ENCODE measurements at regions of chr3 and their contacts with region 1.

Region 1: GRCh38 chr3:185733980-185734724 is 90.7 kb downstream of the IGF2BP2 start:
- DNase-seq: peak; percentile 71 to 82
- ATAC-seq: peak; percentile 92
- H3K4me3 ChIP-seq: no peak overlapping the region
- H3K27ac ChIP-seq: no peak overlapping the region
- H3K4me1 ChIP-seq: peaks cover 46% of the 10 kb centered on the region
- CTCF ChIP-seq: peak; percentile 67
- EP300 ChIP-seq: no peak
- POLR2A ChIP-seq: no peak
- RAD21 ChIP-seq: peak; percentile 80 to 83

Region 2: GRCh38 chr3:185744997-185745843 is 11.1 kb after region 1 on chr3:
- CTCF ChIA-PET with region 1: interaction called, 12 read pairs
- POLR2A ChIA-PET with region 1: no interaction called
- DNase-seq: peak in 1 of 2 experiments; percentile 29
- ATAC-seq: peak in 1 of 2 experiments; percentile 70; a peak in 3 of 6 replicates
- H3K4me3 ChIP-seq: no peak overlapping the region
- H3K27ac ChIP-seq: no peak overlapping the region
- H3K4me1 ChIP-seq: peaks cover 8% of the 10 kb centered on the region; the same call in 1 of the 3 replicates
- CTCF ChIP-seq: no peak
- EP300 ChIP-seq: no peak
- POLR2A ChIP-seq: no peak
- RAD21 ChIP-seq: no peak

Region 3: DNA sequence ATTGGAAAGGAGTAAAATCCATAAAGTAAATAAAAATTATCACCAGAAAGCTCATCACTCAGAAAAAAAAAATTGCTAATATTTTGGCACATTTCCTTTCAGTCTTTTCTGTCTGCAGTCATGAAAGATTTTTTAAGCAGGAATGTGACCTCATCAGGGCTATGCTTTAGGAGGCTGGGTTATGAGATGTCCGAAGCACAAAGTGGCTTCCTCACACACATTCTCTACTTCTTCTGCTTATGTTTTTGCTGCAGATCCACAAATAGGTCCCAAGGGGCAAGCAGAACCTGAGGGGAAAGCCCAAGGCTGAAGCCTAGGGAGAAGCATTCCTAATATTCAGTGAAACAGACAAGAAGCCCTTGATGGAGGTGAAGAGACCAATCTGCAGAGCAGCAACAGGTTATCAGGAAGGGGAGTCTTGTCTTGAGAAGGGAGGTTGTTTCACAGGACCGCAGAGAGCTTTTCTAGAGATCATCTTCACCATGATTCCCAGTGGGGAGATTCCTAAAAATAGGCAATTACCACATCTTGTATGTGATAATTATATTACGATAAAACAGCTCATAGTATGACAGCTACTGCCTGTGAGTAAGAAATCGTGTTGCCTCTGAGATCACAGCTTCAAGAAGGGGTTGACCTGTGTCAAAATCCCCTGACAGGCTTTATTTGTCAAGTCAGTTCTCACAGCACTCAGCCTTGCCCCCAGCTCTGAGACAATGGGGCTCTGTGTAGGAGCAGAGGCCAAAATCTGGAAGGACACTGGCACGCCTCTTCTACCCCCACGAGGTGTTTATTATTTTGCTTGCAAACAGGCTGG is 30.2 kb after region 1 on chr3:
- CTCF ChIA-PET with region 1: interaction called, 31 read pairs
- POLR2A ChIA-PET with region 1: no interaction called
- DNase-seq: no peak
- ATAC-seq: no peak
- H3K4me3 ChIP-seq: no peak overlapping the region
- H3K27ac ChIP-seq: no peak overlapping the region
- H3K4me1 ChIP-seq: no peaks in the 10 kb centered on the region
- CTCF ChIP-seq: no peak
- EP300 ChIP-seq: no peak
- POLR2A ChIP-seq: no peak
- RAD21 ChIP-seq: no peak

Region 4: GRCh38 chr3:185770109-185770508 is 36.0 kb after region 1 on chr3:
- CTCF ChIA-PET with region 1: interaction called, 31 read pairs
- POLR2A ChIA-PET with region 1: no interaction called
- DNase-seq: no peak
- ATAC-seq: no peak
- H3K4me3 ChIP-seq: no peak overlapping the region
- H3K27ac ChIP-seq: no peak overlapping the region
- H3K4me1 ChIP-seq: no peaks in the 10 kb centered on the region
- CTCF ChIP-seq: no peak
- EP300 ChIP-seq: no peak
- POLR2A ChIP-seq: no peak
- RAD21 ChIP-seq: no peak

Region 5: DNA sequence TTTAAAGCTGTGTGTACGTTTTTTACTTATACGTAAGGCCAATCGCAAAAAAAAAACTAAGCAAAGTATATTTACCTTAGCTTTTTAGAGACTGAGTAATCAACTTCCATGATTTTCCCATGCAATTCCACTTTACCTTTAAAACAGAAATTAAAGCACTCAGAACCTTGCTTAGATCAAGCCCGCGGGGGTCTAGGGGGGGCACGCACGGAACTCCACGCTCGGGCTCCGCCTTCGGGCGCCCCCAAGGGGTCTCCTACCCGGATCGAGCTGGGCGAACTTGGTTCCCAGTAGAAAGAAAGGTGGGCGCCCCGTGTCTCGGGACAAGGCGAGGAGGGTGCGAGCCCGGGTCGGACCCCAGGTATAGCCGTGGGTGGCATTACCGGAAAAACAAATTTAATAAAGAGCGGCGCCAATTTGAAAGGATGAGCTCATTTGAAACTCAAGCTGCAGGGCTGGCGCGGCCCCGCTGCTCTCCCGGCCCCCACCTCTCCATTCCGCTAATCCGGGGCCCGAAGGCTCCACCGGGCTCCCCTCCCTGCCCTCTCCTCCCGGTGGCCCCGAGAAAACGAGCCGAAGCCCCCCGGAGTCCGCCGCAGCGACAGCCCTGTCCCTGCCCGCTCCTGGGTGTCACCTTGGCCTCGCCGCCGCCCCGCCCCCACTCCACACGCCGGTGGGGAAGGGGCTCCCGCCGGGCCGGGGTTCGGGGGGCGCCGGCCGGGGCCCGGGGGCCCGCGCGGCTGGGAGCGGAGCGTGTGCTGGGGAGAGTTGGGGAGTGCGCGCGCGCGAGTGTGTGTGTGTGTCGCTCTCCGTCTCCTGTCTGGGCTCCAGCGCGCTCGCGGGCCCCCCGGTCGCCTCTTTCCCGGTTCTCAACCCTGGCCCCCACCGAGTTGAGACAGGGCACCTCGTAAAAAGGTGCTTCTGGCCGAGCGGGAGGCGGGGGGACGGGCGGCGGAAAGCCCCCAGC is 89.2 kb after region 1 on chr3:
- CTCF ChIA-PET with region 1: interaction called, 11 read pairs
- POLR2A ChIA-PET with region 1: no interaction called
- DNase-seq: no peak
- ATAC-seq: peak; percentile 48 to 64; a peak in 4 of 6 replicates
- H3K4me3 ChIP-seq: peak overlapping the region; percentile 91
- H3K27ac ChIP-seq: peak overlapping the region; percentile 94 to 99
- H3K4me1 ChIP-seq: peaks cover 39% of the 10 kb centered on the region
- CTCF ChIP-seq: no peak
- EP300 ChIP-seq: no peak
- POLR2A ChIP-seq: no peak
- RAD21 ChIP-seq: no peak

Region 6: DNA sequence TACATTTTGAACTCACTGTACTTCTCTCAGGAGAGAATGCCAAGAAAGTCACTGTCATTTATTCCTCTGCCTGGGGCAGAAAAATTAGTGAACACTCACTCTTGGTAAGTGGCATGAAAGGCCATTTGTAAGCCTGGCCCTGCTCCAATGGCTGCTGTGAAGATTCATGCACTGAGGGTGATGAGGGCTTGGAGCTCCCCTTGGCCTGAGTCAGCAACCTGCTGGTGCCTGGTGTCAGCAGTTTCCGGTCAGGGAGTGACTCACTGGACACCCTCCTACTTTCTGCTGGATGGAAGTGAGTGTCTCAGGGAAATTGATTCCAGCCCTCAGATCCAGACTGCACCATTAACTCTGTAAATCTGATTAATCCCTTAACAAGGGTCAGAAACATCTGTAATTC is 166.1 kb after region 1 on chr3:
- CTCF ChIA-PET with region 1: interaction called, 31 read pairs
- POLR2A ChIA-PET with region 1: no interaction called
- DNase-seq: peak; percentile 64 to 68
- ATAC-seq: peak; percentile 98 to 100
- H3K4me3 ChIP-seq: no peak overlapping the region
- H3K27ac ChIP-seq: peak overlapping the region in 1 of 2 experiments; percentile 62; a peak in 3 of 6 replicates
- H3K4me1 ChIP-seq: peaks cover 9% of the 10 kb centered on the region; the same call in 2 of the 3 replicates
- CTCF ChIP-seq: no peak
- EP300 ChIP-seq: no peak
- POLR2A ChIP-seq: no peak
- RAD21 ChIP-seq: no peak